IMR-90 (cell line): ENCODE measurements at regions of chr13 and their contacts with region 1.

Region 1: DNA sequence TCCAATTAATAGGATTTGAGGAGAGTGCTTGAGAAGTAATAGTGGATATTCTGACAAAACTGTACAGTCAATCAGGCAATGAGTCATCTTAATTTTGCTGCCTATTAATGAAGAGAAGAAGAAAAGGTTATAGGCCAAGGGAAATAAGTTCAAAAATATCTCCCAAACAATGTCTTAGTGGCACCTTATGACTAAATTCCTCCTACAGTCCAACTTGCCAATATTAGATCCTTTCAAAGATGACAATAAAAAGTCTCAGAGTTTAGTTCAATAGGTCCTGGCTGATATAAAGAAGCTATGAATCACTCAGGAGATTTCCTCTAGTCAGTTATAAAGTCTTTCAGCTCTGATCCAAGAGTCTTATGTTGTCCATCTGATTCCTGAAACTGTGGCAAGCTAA is 27.9 kb downstream of the UGGT2 start:
- DNase-seq: no peak
- ATAC-seq: no peak
- H3K4me3 ChIP-seq: no peak overlapping the region
- H3K27ac ChIP-seq: no peak overlapping the region
- H3K4me1 ChIP-seq: no peaks in the 10 kb centered on the region
- H3K27me3 ChIP-seq: no peaks in the 10 kb centered on the region
- CTCF ChIP-seq: no peak
- POLR2A ChIP-seq: no peak
- RAD21 ChIP-seq: no peak

Region 2: GRCh38 chr13:96822895-96823294 is 797.6 kb after region 1 on chr13:
- CTCF ChIA-PET with region 1: interaction called, 8 read pairs
- POLR2A ChIA-PET with region 1: no interaction called
- dilution Hi-C with region 1: no loop called
- in situ Hi-C with region 1: loop called (anchors 25 kb)
- intact Hi-C with region 1: loop called (anchors 5 kb)
- DNase-seq: no peak
- ATAC-seq: no peak
- H3K4me3 ChIP-seq: no peak overlapping the region
- H3K27ac ChIP-seq: no peak overlapping the region
- H3K4me1 ChIP-seq: no peaks in the 10 kb centered on the region
- H3K27me3 ChIP-seq: no peaks in the 10 kb centered on the region
- CTCF ChIP-seq: no peak
- POLR2A ChIP-seq: no peak
- RAD21 ChIP-seq: no peak